ENCODE measurements at regions of chr10 and their contacts with region 1.

Region 1: DNA sequence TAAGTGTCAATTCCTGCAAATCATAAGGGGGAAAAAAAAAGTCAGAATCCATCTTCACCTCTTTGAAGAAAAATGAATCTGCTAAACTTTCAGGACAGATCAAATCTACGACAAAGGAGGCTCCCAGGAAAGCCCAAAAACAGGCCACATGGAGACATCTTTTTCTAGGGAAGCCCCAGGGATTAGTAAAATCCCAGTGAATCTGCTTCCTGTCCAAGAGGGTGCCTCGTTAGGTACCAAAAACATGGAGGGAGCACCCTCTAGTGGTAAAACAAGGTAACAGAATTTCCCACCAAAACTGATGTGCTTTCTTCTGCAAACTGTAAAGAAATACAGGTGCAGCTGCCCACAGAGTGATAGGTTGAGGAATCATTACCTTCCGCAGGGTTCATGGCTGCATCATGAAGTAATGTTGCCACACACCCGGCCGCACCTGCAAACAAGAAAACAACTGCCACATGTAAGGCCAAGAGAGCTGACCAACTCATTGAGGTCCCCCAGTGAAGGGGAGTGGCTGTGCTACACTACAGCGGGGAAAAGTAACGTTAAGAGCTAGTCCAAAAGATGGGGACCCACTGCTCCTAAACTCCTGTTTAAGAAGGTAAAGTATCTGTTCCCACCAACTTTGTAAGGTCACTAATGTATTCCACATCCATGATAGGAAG is 7.9 kb downstream of the SLC25A28 start:
- DNase-seq: no peak
- ATAC-seq: peak; percentile 56 to 58
- H3K4me3 ChIP-seq: no peak overlapping the region
- H3K27ac ChIP-seq: no peak overlapping the region
- H3K4me1 ChIP-seq: no peaks in the 10 kb centered on the region
- H3K27me3 ChIP-seq: no peaks in the 10 kb centered on the region

Region 2: GRCh38 chr10:99387071-99387470 is 225.2 kb before region 1 on chr10:
- intact Hi-C with region 1: loop called in 2 of 4 experiments (anchors 2 to 5 kb)
- DNase-seq: no peak
- ATAC-seq: no peak
- H3K4me3 ChIP-seq: no peak overlapping the region
- H3K27ac ChIP-seq: no peak overlapping the region
- H3K4me1 ChIP-seq: peaks cover 7% of the 10 kb centered on the region
- H3K27me3 ChIP-seq: no peaks in the 10 kb centered on the region

Region 3: GRCh38 chr10:99435986-99436638 is 176.2 kb before region 1 on chr10:
- intact Hi-C with region 1: loop called (anchors 5 kb)
- DNase-seq: no peak
- ATAC-seq: peak in 1 of 2 donors; percentile 34
- H3K4me3 ChIP-seq: no peak overlapping the region
- H3K27ac ChIP-seq: no peak overlapping the region
- H3K4me1 ChIP-seq: no peaks in the 10 kb centered on the region
- H3K27me3 ChIP-seq: no peaks in the 10 kb centered on the region

Region 4: GRCh38 chr10:99444383-99445045 is 167.8 kb before region 1 on chr10:
- intact Hi-C with region 1: loop called in 3 of 4 experiments (anchors 5 kb)
- DNase-seq: no peak
- ATAC-seq: no peak
- H3K4me3 ChIP-seq: no peak overlapping the region
- H3K27ac ChIP-seq: no peak overlapping the region
- H3K4me1 ChIP-seq: no peaks in the 10 kb centered on the region
- H3K27me3 ChIP-seq: no peaks in the 10 kb centered on the region

Region 5: DNA sequence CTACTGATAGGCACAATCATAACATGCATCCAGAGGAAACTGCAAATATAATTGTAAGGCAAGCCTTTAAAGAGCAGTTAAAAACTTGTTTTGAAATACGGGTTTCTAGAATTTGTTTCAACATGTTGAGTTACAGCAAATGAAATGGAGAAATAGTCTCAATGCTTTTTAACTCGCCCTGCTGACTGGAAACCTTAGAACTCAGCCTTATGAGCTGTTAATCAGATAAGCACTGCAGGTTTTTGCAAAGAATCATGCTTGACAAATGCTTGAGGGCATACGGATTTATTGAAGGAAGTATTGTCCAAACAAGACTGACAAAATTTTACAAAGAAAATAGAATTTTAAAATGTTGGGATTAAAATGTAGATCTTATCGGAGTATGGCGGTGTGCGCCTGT is 42.5 kb after region 1 on chr10:
- intact Hi-C with region 1: no loop called
- DNase-seq: no peak
- ATAC-seq: no peak
- H3K4me3 ChIP-seq: no peak overlapping the region
- H3K27ac ChIP-seq: no peak overlapping the region
- H3K4me1 ChIP-seq: no peaks in the 10 kb centered on the region
- H3K27me3 ChIP-seq: no peaks in the 10 kb centered on the region

Region 6: GRCh38 chr10:99748823-99749451 is 136.6 kb after region 1 on chr10:
- intact Hi-C with region 1: no loop called
- DNase-seq: no peak
- ATAC-seq: no peak
- H3K4me3 ChIP-seq: no peak overlapping the region
- H3K27ac ChIP-seq: no peak overlapping the region
- H3K4me1 ChIP-seq: no peaks in the 10 kb centered on the region
- H3K27me3 ChIP-seq: no peaks in the 10 kb centered on the region